CD8-positive, alpha-beta T cell (primary cell): ENCODE measurements at regions of chr17 and their contacts with region 1.

Region 1: DNA sequence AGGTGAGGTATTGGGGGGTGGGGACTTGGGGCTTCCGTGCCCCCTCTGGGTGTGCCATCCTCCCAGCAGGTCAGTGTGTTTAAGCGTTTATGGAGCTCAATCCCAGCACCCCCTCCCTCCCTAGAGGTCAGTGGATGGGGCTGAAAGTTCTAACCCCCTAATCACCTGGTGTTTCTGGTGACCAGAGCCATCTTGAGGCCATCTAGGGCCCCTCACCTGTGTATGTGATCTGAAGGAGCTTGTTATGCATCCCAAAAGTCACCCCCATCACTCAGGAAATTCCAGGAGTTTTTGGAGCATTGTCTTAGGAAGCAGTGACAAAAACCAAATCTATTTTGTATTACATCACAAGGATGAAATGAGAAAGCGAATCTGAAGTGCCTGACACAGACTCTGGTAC is 67.8 kb upstream of the NOL11 start:
- DNase-seq: no peak
- ATAC-seq: no peak
- H3K4me3 ChIP-seq: no peak overlapping the region
- H3K4me3 Mint-ChIP-seq: no peak overlapping the region
- H3K27ac ChIP-seq: peak overlapping the region in 1 of 2 experiments; percentile 12
- H3K27ac Mint-ChIP-seq: peak overlapping the region; percentile 27
- H3K4me1 ChIP-seq: no peaks in the 10 kb centered on the region
- H3K4me1 Mint-ChIP-seq: peaks cover 31% of the 10 kb centered on the region
- H3K27me3 ChIP-seq: no peaks in the 10 kb centered on the region
- H3K27me3 Mint-ChIP-seq: no peaks in the 10 kb centered on the region
- CTCF ChIP-seq: no peak

Region 2: GRCh38 chr17:67272312-67273050 is 377.4 kb before region 1 on chr17:
- CTCF ChIA-PET with region 1: no interaction called
- POLR2A ChIA-PET with region 1: no interaction called
- intact Hi-C with region 1: no loop called
- DNase-seq: peak in 3 of 9 experiments; percentile 8 to 56 (median 45)
- ATAC-seq: peak; percentile 56
- H3K4me3 ChIP-seq: no peak overlapping the region
- H3K4me3 Mint-ChIP-seq: no peak overlapping the region
- H3K27ac ChIP-seq: no peak overlapping the region
- H3K27ac Mint-ChIP-seq: no peak overlapping the region
- H3K4me1 ChIP-seq: no peaks in the 10 kb centered on the region
- H3K4me1 Mint-ChIP-seq: no peaks in the 10 kb centered on the region
- H3K27me3 ChIP-seq: no peaks in the 10 kb centered on the region
- H3K27me3 Mint-ChIP-seq: no peaks in the 10 kb centered on the region
- CTCF ChIP-seq: no peak

Region 3: DNA sequence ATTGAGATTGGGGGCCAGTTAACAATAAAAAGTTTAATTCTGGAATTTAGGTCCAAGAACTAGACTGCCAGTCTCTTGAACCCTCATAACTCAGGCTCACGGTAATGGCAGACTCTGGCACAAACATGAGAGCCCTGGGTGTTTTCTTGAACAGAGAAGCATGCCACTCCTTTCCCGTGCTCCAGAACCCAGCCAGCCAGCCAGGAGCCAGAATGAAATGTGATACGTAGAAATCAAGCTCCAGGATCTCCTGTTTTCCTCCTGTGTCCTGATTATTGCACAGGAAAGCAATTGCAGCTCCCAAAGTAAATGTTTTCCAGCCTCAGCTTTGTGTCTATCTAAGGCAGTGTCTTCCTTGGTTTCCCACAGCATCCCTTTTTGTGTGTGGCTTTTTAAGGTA is 21.6 kb after region 1 on chr17:
- CTCF ChIA-PET with region 1: no interaction called
- POLR2A ChIA-PET with region 1: no interaction called
- intact Hi-C with region 1: loop called in 1 of 2 experiments (anchors 1 kb)
- DNase-seq: no peak
- ATAC-seq: no peak
- H3K4me3 ChIP-seq: no peak overlapping the region
- H3K4me3 Mint-ChIP-seq: no peak overlapping the region
- H3K27ac ChIP-seq: no peak overlapping the region
- H3K27ac Mint-ChIP-seq: peak overlapping the region; percentile 27
- H3K4me1 ChIP-seq: no peaks in the 10 kb centered on the region
- H3K4me1 Mint-ChIP-seq: peaks cover 3% of the 10 kb centered on the region
- H3K27me3 ChIP-seq: no peaks in the 10 kb centered on the region
- H3K27me3 Mint-ChIP-seq: no peaks in the 10 kb centered on the region
- CTCF ChIP-seq: no peak

Region 4: DNA sequence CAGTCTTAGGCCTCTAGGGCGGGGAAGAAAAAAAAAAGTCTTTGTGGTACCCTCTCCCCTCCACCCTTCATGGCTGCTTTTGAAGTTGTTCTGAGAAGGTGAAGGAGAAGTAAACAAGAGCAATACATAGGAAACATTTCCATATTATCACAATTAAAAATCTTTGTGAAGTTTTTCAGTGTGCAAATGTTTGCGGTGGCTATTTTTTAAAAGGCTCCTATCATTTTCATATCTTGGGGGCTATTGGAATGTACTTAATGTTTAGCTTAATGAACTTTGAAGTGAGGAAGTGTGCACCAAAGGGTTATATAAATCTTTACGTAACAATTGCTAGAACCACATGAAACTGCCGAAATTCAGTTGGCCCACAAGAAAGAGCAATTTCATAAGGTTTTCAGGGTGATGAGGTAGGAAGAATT is 75.5 kb after region 1 on chr17:
- CTCF ChIA-PET with region 1: no interaction called
- POLR2A ChIA-PET with region 1: no interaction called
- intact Hi-C with region 1: no loop called
- DNase-seq: peak in 3 of 9 experiments; percentile 28 to 74 (median 50)
- ATAC-seq: peak; percentile 74
- H3K4me3 ChIP-seq: peak overlapping the region in 1 of 2 experiments; percentile 3
- H3K4me3 Mint-ChIP-seq: peak overlapping the region; percentile 4
- H3K27ac ChIP-seq: peak overlapping the region; percentile 47 to 50
- H3K27ac Mint-ChIP-seq: peak overlapping the region; percentile 81
- H3K4me1 ChIP-seq: peaks cover 26% of the 10 kb centered on the region
- H3K4me1 Mint-ChIP-seq: peaks cover 38% of the 10 kb centered on the region
- H3K27me3 ChIP-seq: no peaks in the 10 kb centered on the region
- H3K27me3 Mint-ChIP-seq: no peaks in the 10 kb centered on the region
- CTCF ChIP-seq: no peak